Ovary (tissue), 10 donors: ENCODE measurements at regions of chr9 and their contacts with region 1.

Region 1: DNA sequence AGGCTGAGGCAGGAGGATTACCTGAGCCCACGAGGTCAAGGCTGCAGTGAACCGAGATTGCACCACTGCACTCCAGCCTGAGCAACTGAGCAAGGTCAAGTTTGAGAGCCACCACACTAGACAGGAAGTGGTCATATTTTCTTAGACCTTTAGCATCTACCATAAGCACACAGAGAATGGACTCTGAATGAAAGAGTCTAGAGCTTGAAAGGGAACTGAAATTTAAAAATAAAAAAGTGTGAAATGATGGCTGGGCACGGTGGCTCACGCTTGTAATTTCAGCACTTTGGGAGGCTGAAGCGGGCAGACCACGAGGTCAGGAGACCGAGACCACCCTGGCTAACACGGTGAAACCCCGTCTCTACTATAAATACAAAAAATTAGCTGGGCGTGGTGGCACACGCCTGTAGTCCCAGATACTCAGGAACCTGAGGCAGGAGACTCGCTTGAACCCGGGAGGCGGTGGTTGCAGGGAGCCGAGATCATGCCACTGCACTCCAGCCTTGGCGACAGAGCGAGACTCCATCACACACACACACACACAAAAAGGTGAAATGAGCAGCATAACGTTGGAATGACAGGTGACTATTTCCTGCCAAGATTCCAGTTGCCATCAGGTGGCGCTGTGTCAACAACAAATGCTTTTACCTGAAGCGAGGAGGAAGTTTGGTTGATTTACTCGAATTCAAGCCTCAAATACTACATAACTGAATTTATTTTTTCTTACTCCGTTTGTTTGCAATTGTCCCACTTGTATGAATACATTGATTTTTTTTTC is 21.3 kb upstream of the AK3 start:
- DNase-seq: peak; percentile 60 to 80 (median 77)
- H3K4me3 ChIP-seq: no peak overlapping the region
- H3K27ac ChIP-seq: no peak overlapping the region
- H3K4me1 ChIP-seq: no peaks in the 10 kb centered on the region
- H3K27me3 ChIP-seq: no peaks in the 10 kb centered on the region
- CTCF ChIP-seq: peak; percentile 33 to 80 (median 75)
- EP300 ChIP-seq: no peak
- POLR2A ChIP-seq: no peak

Region 2: DNA sequence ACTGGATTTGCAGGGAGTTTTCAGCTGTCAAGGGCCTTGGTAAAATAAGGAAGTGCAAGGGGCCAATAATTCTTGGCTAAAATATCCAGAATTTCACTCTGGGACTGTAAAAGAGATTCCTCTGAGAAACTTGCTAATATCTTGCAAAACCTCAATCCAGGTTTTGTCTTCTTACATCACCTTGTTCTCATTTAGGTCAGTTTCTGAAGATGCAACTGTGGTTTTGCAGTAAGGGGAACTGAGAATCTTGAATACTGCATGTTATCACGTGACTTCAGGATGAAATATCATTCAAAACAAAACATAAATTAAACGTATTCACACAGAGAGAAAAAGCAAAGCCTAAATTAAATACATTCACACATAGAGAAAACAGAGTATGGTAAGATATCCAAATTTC is 831.6 kb after region 1 on chr9:
- intact Hi-C with region 1: loop called in 2 of 4 experiments (anchors 10 kb)
- DNase-seq: no peak
- H3K4me3 ChIP-seq: no peak overlapping the region
- H3K27ac ChIP-seq: no peak overlapping the region
- H3K4me1 ChIP-seq: no peaks in the 10 kb centered on the region
- H3K27me3 ChIP-seq: no peaks in the 10 kb centered on the region
- CTCF ChIP-seq: no peak
- EP300 ChIP-seq: no peak
- POLR2A ChIP-seq: no peak